MCF 10A (cell line): ENCODE measurements at regions of chr5 and their contacts with region 1.

Region 1: GRCh38 chr5:39148983-39149534 is 70.3 kb downstream of the FYB1 start:
- DNase-seq: peak; percentile 29
- H3K4me3 Mint-ChIP-seq: no peak overlapping the region
- H3K27ac Mint-ChIP-seq: no peak overlapping the region
- H3K4me1 Mint-ChIP-seq: no peaks in the 10 kb centered on the region
- H3K27me3 Mint-ChIP-seq: no peaks in the 10 kb centered on the region
- CTCF ChIP-seq: peak; percentile 49

Region 2: DNA sequence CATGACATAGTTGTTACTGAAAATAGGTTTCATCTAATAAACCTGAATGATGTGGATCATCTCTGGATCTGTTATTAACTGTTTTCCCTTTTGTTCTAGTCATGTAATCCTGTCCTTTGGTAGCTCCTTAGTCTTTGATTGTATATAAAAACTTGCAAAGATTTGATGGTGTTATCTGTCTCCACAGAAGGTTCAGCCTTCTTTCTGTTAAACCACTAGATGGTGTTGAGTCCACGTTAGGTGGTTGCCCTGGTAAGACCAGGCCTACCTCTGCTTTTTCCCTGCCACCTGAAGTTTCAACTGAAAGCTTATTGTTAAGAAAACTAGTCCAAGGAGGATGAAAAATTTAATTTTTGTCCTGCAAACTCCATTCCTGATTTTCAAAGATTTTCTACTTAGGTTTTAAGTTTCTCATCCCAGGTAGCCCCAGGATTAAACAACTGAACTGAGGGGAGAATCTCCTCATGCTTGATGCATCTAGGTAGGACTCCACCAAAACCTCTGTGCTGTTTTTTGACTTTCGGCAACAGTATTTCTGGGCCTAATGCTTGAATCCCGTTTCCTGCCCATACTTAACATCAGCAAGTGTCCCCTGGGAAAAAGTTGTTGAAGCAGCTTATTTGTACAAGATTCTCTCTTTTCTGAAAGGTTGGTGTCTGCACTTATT is 143.4 kb before region 1 on chr5:
- CTCF ChIA-PET with region 1: no interaction called
- POLR2A ChIA-PET with region 1: no interaction called
- intact Hi-C with region 1: loop called (anchors 5 kb)
- DNase-seq: peak; percentile 37
- H3K4me3 Mint-ChIP-seq: no peak overlapping the region
- H3K27ac Mint-ChIP-seq: no peak overlapping the region
- H3K4me1 Mint-ChIP-seq: peaks cover 8% of the 10 kb centered on the region
- H3K27me3 Mint-ChIP-seq: no peaks in the 10 kb centered on the region
- CTCF ChIP-seq: peak; percentile 41

Region 3: GRCh38 chr5:39194466-39195136 is 45.5 kb after region 1 on chr5:
- CTCF ChIA-PET with region 1: interaction called, 3 read pairs
- POLR2A ChIA-PET with region 1: no interaction called
- intact Hi-C with region 1: loop called (anchors 5 kb)
- DNase-seq: peak; percentile 91
- H3K4me3 Mint-ChIP-seq: no peak overlapping the region
- H3K27ac Mint-ChIP-seq: peak overlapping the region; percentile 26
- H3K4me1 Mint-ChIP-seq: peaks cover 31% of the 10 kb centered on the region
- H3K27me3 Mint-ChIP-seq: no peaks in the 10 kb centered on the region
- CTCF ChIP-seq: no peak

Region 4: GRCh38 chr5:39570403-39571027 is 421.5 kb after region 1 on chr5:
- CTCF ChIA-PET with region 1: interaction called, 4 read pairs
- POLR2A ChIA-PET with region 1: no interaction called
- intact Hi-C with region 1: loop called (anchors 5 kb)
- DNase-seq: peak; percentile 44
- H3K4me3 Mint-ChIP-seq: no peak overlapping the region
- H3K27ac Mint-ChIP-seq: no peak overlapping the region
- H3K4me1 Mint-ChIP-seq: no peaks in the 10 kb centered on the region
- H3K27me3 Mint-ChIP-seq: no peaks in the 10 kb centered on the region
- CTCF ChIP-seq: peak; percentile 64